PC-3 (cell line): ENCODE measurements at regions of chr11 and their contacts with region 1.

Region 1: DNA sequence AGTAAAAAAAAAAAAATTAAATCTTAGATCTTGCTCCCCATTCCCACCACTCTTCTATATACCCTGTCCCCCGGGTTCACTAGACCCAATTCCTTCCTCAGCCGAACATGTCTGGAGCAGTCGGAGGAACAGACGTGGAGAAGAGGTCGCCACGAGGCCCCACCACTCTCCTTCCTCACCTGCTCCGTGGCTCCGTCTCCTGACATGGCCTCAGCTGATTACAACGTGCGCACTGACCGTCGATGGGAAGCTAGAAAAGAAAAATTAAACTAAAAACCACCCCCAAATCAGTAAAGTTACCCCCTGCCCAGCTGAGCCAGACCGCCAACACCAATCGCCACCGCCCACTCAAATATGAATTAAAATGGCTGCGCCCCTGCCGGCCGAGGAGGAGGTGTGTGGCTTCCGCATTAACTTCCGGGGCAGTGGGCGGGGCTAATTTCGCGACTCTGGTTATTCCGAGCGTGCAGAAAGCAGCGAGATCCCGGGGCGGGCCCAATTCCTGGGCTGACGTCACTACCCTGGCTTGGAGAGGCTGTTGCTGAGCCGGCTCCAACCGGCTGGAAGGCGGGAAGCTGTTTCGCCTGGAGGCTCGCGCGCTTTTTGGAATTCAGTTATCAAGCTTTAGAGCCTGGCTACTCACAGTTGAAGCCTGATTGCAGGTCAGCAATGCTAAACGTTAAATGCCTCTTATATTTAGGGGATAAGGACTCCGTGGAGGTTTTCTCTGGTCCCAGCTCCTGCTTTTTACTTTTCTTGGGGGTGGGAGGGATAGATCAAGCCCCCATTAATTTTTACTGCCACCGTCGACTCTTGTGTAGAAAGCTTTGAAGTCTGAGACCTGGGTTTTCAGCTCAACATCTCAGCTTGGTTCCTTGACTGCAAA is at the start of gene CSTF3:
- DNase-seq: peak; percentile 99
- ATAC-seq: peak; percentile 94
- H3K4me3 ChIP-seq: peak within 1 kb of the TSS; percentile 96
- H3K27ac ChIP-seq: peak within 1 kb of the TSS; percentile 77
- H3K4me1 ChIP-seq: peaks cover 27% of the 10 kb centered on the region
- H3K27me3 ChIP-seq: no peaks in the 10 kb centered on the region
- CTCF ChIP-seq: no peak
- total RNA-seq, gene CSTF3: 18.5 and 30.0 TPM in 2 replicates

Region 2: GRCh38 chr11:31757260-31757835 is 1404.0 kb before region 1 on chr11:
- CTCF ChIA-PET with region 1: no interaction called
- POLR2A ChIA-PET with region 1: no interaction called
- intact Hi-C with region 1: no loop called
- DNase-seq: no peak
- ATAC-seq: no peak
- H3K4me3 ChIP-seq: no peak overlapping the region
- H3K27ac ChIP-seq: no peak overlapping the region
- H3K4me1 ChIP-seq: no peaks in the 10 kb centered on the region
- H3K27me3 ChIP-seq: no peaks in the 10 kb centered on the region
- CTCF ChIP-seq: no peak

Region 3: GRCh38 chr11:33207408-33207985 is 46.1 kb after region 1 on chr11:
- CTCF ChIA-PET with region 1: no interaction called
- POLR2A ChIA-PET with region 1: no interaction called
- intact Hi-C with region 1: no loop called
- DNase-seq: no peak
- ATAC-seq: no peak
- H3K4me3 ChIP-seq: no peak overlapping the region
- H3K27ac ChIP-seq: no peak overlapping the region
- H3K4me1 ChIP-seq: no peaks in the 10 kb centered on the region
- H3K27me3 ChIP-seq: no peaks in the 10 kb centered on the region
- CTCF ChIP-seq: no peak

Region 4: DNA sequence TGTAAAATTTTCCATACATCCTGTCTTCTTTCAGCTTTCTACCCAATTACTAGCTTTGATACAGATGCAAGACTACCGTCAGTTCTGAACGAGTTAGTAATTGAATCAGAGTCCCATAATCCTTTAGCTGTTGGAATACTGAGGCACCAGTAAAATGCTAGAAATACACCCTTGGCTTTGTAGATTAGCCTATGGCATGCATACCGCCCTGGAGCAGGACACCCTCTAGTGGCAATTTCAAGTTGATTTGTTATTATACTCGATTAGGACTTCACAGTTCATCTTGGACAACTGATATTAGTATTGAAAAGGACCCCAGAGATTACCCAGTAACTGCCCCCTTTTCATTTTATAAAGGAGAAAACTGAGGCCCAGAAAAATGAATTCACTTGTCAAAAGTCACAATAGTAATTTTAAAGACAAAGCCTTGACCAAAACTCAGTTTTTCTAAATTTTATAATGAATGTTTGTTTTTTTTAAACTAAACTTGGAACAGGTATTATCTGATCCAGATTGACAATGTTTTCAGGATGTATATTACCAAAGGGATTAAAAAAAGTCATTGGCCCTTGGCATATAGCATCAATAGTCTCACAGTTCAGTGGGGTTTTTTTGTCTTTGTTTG is 168.5 kb after region 1 on chr11:
- CTCF ChIA-PET with region 1: no interaction called
- POLR2A ChIA-PET with region 1: no interaction called
- intact Hi-C with region 1: loop called (anchors 1 kb)
- DNase-seq: peak; percentile 74
- ATAC-seq: peak; percentile 93
- H3K4me3 ChIP-seq: no peak overlapping the region
- H3K27ac ChIP-seq: no peak overlapping the region
- H3K4me1 ChIP-seq: no peaks in the 10 kb centered on the region
- H3K27me3 ChIP-seq: no peaks in the 10 kb centered on the region
- CTCF ChIP-seq: peak; percentile 84